A549 (cell line): ENCODE measurements at regions of chr6 and their contacts with region 1.

Region 1: GRCh38 chr6:84774157-84774984 is 10.0 kb upstream of the TBX18 start:
- DNase-seq: peak; percentile 41 to 80
- ATAC-seq: peak; percentile 75 to 89
- H3K4me3 ChIP-seq: peak overlapping the region; percentile 53
- H3K27ac ChIP-seq: peak overlapping the region; percentile 73 to 99
- H3K4me1 ChIP-seq: peaks cover 8% of the 10 kb centered on the region; the same call in 1 of the 3 replicates
- CTCF ChIP-seq: peak; percentile 72
- EP300 ChIP-seq: no peak
- POLR2A ChIP-seq: no peak
- RAD21 ChIP-seq: peak; percentile 40 to 69; a peak in 4 of 5 replicates

Region 2: DNA sequence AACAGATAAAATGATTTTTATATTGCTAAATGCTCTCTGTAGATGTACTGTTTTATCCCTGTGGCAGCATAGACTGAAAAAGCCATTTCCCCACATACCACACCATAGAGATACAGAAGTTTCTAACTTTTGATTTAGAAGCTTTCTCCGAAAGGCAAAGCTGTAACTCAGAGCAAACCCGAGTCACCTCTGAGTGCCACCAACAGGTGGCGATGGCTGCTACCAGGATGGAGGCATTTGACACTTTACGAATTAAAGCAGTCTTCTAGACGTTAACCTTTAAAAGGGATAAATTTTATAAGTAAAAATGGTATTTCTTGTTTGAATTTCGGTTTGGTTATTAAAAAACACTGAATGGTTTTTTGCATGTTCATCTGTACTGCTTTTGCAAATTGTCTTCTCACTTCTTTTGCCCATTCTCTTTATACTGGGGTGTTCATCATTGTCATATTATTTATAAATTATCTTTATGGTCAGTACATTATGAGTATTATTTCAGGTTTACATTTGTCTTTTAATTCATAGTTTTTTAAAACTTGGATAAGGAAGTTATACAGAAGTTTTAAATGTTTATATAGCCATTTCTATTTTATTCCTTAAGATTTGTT is 346.0 kb before region 1 on chr6:
- CTCF ChIA-PET with region 1: interaction called, 10 read pairs
- POLR2A ChIA-PET with region 1: no interaction called
- DNase-seq: peak; percentile 7 to 51
- ATAC-seq: peak; percentile 54 to 76; a peak in 4 of 6 replicates
- H3K4me3 ChIP-seq: no peak overlapping the region
- H3K27ac ChIP-seq: no peak overlapping the region
- H3K4me1 ChIP-seq: no peaks in the 10 kb centered on the region
- CTCF ChIP-seq: peak; percentile 84
- EP300 ChIP-seq: no peak
- POLR2A ChIP-seq: no peak
- RAD21 ChIP-seq: peak; percentile 84

Region 3: DNA sequence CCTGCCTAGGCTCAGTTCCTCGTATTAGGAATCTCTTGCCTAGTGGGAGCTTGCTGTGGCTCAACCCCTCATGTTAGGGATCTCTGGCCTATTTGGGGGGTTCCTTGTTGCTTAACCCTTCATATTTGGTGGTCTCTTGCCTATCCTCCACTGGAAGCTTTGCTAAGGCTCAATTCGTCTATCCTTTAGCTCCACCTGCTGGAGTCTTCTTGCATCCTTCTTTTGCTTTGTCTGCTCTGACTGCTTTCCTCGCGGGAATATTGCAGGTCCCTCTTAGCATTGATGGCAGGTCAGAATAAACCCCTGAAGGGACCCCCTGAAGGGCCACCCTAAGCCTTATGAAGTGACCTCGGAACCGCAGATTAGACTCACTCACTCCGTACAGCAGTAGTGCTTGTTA is 193.0 kb after region 1 on chr6:
- CTCF ChIA-PET with region 1: interaction called, 10 read pairs
- POLR2A ChIA-PET with region 1: no interaction called
- DNase-seq: peak; percentile 20 to 65
- ATAC-seq: peak; percentile 62 to 87; a peak in 4 of 6 replicates
- H3K4me3 ChIP-seq: no peak overlapping the region
- H3K27ac ChIP-seq: peak overlapping the region; percentile 28 to 33; a peak in 2 of 6 replicates
- H3K4me1 ChIP-seq: no peaks in the 10 kb centered on the region
- CTCF ChIP-seq: peak; percentile 57
- EP300 ChIP-seq: no peak
- POLR2A ChIP-seq: no peak
- RAD21 ChIP-seq: peak; percentile 73 to 87

Region 4: DNA sequence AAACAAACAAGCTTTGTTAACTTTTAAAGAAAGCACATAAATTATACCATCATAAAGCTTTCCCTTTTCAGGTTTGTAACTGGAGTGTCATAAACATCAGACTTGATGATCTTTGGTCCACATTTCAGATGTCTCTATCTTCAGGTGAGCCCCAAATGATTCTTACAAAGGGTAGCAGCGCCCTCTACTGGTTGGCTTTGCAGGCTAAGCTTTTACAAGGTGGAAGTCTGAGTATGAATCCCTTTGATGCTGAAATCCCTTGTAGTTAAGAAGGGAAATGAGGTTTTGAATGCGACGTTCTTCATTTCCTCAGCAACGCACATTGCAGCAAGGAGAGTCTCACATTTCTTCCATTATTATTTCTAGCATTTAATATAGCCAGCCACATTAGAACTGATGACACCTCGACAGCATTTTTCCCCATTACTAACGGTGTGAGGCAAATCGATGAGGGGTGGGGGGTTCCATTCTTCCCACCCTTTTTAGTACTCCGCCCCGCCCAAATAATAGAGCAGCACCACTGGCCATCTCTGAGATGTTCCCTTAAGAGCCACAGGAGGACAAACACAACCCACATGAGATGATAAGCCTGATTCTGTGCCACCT is 549.2 kb after region 1 on chr6:
- CTCF ChIA-PET with region 1: interaction called, 13 read pairs
- POLR2A ChIA-PET with region 1: no interaction called
- DNase-seq: peak; percentile 11 to 80
- ATAC-seq: peak; percentile 86 to 96; a peak in 5 of 6 replicates
- H3K4me3 ChIP-seq: no peak overlapping the region
- H3K27ac ChIP-seq: no peak overlapping the region
- H3K4me1 ChIP-seq: no peaks in the 10 kb centered on the region
- CTCF ChIP-seq: peak; percentile 80
- EP300 ChIP-seq: no peak
- POLR2A ChIP-seq: no peak
- RAD21 ChIP-seq: peak; percentile 84 to 86